Heart left ventricle (tissue), 16 donors: ENCODE measurements at regions of chr2 and their contacts with region 1.

Region 1: GRCh38 chr2:213723041-213723560 is 438.8 kb downstream of the SPAG16 start:
- DNase-seq: no peak
- ATAC-seq: no peak
- H3K4me3 ChIP-seq: no peak overlapping the region
- H3K27ac ChIP-seq: no peak overlapping the region
- H3K4me1 ChIP-seq: no peaks in the 10 kb centered on the region
- H3K27me3 ChIP-seq: no peaks in the 10 kb centered on the region
- CTCF ChIP-seq: no peak
- POLR2A ChIP-seq: no peak

Region 2: GRCh38 chr2:213703406-213704098 is 19.5 kb before region 1 on chr2:
- intact Hi-C with region 1: loop called in 1 of 10 experiments (anchors 1 kb)
- DNase-seq: no peak
- ATAC-seq: no peak
- H3K4me3 ChIP-seq: no peak overlapping the region
- H3K27ac ChIP-seq: no peak overlapping the region
- H3K4me1 ChIP-seq: no peaks in the 10 kb centered on the region
- H3K27me3 ChIP-seq: no peaks in the 10 kb centered on the region
- CTCF ChIP-seq: no peak
- POLR2A ChIP-seq: no peak

Region 3: DNA sequence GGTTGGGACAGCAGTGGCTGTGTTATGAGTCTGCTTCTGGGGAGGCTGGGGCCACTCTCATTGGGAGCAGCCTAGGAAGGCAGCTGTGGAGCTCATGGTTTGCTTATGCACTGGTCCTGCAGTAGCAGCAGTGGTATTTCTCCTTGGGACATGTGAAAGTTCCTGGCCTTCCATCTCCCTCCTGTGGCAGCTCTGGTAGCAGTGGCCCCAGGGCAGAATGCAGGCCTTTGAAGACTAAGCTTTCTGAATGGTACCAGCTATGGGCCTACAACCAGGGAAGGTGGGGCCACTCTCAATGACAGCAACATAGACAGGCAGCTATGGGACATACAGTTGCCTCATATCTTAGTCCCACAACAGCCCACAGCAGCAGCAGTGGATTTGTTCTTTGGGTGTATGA is 570.5 kb after region 1 on chr2:
- intact Hi-C with region 1: no loop called
- DNase-seq: no peak
- ATAC-seq: no peak
- H3K4me3 ChIP-seq: no peak overlapping the region
- H3K27ac ChIP-seq: no peak overlapping the region
- H3K4me1 ChIP-seq: no peaks in the 10 kb centered on the region
- H3K27me3 ChIP-seq: no peaks in the 10 kb centered on the region
- CTCF ChIP-seq: no peak
- POLR2A ChIP-seq: no peak